AG04449 (cell line): ENCODE measurements at regions of chr19 and their contacts with region 1.

Region 1: GRCh38 chr19:10899151-10899653 is 27.8 kb downstream of the CARM1 start:
- DNase-seq: no peak
- H3K4me3 ChIP-seq: no peak overlapping the region
- CTCF ChIP-seq: no peak

Region 2: DNA sequence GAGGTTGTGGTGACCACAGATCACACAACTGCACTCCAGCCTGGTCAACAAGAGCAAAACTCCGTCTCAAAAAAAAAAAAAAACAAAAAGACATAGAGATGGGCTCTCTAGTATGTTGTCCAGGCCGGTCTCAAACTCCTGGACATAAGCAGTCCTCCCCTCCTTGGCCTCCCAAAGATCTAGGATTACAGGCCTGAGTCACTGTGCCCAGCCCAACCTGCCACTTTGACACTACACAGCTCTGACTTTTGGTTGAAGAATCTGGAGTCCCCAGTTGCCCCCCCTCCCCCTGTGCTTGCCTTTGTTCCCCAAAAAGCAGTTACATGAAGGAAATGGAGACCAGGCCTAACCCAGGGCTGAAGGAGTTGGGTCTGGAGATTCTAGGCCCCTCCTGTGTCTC is 14.9 kb before region 1 on chr19:
- CTCF ChIA-PET with region 1: interaction called, 10 read pairs
- POLR2A ChIA-PET with region 1: no interaction called
- DNase-seq: no peak
- H3K4me3 ChIP-seq: no peak overlapping the region
- CTCF ChIP-seq: no peak